ENCODE measurements at regions of chr4 and their contacts with region 1.

Region 1: DNA sequence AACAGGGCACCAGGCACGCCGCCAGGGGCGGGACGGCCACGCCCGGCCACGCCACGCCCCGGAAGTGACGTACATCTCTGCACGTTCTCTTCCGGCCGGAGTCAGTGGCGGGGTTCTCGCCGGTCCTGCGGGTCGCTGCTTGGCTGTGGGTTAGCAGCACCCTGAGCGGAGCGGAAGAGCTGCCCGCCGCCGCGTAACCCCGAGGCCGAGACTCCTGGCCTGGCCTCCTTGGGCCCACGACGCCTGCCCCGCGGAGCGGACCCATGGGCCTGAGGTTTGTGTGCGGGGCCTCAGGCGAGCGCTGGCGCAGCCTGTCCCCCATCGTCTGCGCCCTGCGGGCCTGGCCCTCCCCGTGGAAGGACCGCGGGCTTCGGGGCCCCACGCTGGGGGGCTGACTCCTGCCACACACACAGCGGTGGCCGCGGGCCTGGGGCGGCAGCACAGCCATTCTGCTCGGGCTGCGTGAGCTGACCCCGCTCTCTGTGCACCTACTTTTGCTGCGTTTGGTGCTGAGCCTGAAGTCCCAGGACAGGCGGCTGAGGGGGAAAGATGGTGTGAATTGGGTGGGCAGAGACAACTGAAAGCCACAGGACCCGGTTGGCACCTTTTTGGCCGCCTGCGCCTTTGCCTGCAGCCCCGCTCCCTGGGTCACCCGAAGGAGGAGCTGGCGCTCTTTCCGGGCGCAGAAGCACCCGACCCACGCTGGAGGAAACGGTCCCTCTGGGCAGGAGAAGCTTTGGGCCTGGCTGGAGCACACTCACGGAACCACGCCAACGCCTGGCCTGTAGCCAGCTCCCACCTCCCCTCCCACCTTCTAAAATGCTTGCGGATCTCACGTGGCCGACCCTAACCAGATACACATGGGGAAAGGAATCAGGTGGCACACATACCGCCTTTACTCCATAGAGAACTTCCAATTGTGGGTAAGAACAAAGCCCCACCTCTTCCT is 28.1 kb downstream of the NOP14 start:
- DNase-seq: peak; percentile 93 to 99 (median 96)
- ATAC-seq: peak; percentile 58
- H3K4me3 ChIP-seq: peak overlapping the region; percentile 92
- H3K4me3 Mint-ChIP-seq: peak overlapping the region; percentile 93
- H3K27ac ChIP-seq: peak overlapping the region; percentile 82 to 87
- H3K27ac Mint-ChIP-seq: peak overlapping the region; percentile 94
- H3K4me1 ChIP-seq: peaks cover 71% of the 10 kb centered on the region
- H3K4me1 Mint-ChIP-seq: peaks cover 45% of the 10 kb centered on the region
- H3K27me3 ChIP-seq: no peaks in the 10 kb centered on the region
- H3K27me3 Mint-ChIP-seq: no peaks in the 10 kb centered on the region
- CTCF ChIP-seq: no peak

Region 2: DNA sequence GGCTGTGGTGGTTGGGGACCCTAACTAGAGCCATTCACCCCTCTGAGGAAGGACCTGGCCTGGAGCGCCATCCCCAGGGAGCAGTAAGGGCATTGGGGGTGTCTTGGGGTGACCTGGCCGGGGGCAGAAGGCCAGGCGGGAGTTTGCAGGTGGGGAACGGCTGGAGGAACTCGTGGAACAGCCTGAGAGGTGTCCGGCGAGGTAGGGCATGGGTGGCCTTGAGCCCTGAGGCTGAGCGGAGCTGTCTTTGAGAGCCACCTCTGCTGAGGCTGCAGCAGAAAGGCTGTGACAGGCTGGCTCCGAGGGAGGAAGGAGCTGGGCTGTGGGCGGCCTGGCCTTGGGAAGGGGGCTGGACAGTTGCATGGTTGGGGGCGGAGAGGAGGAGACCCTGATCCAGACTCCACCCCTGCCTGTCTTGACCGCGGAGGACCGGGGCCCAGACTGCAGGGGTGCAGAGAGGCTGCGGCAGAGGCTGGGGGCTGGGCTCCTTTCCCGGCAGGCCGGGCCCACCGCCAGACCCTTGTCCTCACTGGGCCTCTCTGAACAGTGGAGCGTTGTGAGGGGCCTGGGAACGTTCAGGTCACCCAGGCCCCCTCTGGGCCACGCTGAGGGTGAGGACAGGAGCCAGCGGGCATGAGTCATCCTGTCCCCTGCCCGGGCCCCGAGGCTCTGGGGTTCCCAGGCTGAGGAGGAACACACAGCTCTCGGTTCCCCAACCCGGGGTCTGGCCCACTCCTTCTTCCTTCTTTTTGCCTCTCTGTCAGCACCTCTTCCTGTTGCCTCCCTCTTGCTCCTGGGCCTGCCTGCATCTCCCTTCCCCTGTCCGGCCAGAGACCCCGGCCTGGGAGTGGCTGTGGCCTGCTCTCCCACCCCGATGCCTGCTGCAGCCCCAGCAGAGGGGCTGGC is 134.1 kb before region 1 on chr4:
- CTCF ChIA-PET with region 1: no interaction called
- POLR2A ChIA-PET with region 1: interaction called, 13 read pairs
- intact Hi-C with region 1: no loop called
- DNase-seq: peak in 5 of 14 experiments; percentile 23 to 79 (median 41)
- ATAC-seq: no peak
- H3K4me3 ChIP-seq: peak overlapping the region; percentile 52
- H3K4me3 Mint-ChIP-seq: peak overlapping the region; percentile 51
- H3K27ac ChIP-seq: peak overlapping the region in 1 of 2 donors; percentile 37
- H3K27ac Mint-ChIP-seq: peak overlapping the region; percentile 70
- H3K4me1 ChIP-seq: peaks cover 86% of the 10 kb centered on the region
- H3K4me1 Mint-ChIP-seq: peaks cover 31% of the 10 kb centered on the region
- H3K27me3 ChIP-seq: no peaks in the 10 kb centered on the region
- H3K27me3 Mint-ChIP-seq: no peaks in the 10 kb centered on the region
- CTCF ChIP-seq: no peak

Region 3: DNA sequence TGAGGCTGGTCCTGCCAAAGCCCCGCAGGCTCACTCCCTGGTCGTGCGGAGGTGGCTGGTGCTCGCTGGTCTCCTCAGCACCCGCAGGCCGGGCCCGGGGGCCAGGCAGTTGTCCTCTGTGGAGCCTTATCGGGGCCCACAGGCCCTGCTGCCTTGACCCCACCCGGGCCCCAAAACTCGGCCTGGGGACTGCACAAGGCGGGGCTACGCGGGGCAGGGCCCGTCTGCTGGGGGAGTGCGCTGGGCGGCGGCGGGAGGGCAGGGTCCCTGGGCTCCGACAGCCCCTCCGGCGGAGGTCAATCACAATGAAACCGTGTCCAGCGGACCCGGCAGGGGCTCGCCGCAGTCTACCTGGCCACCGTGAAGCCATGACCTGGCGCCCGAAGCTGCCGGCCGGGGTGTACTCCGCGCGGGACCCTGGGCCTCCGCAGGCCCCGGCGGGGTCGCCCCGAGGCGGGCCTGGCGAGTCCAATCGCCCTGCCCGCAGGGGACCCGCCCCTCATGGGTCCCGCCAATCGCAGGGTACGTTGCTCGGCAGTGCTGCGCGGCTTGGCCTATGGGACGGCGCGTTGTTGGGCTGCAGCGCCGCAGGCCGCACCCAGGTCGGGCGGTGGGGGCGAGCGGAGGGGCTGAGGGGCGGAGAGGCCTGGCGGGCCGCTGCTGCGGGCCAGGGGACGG is 91.7 kb before region 1 on chr4 and contains the start of gene ADD1:
- CTCF ChIA-PET with region 1: no interaction called
- POLR2A ChIA-PET with region 1: interaction called, 5 read pairs
- intact Hi-C with region 1: loop called in 1 of 2 experiments (anchors 1 kb)
- DNase-seq: peak; percentile 82 to 100 (median 92)
- ATAC-seq: peak; percentile 93
- H3K4me3 ChIP-seq: peak within 1 kb of the TSS; percentile 97
- H3K4me3 Mint-ChIP-seq: peak within 1 kb of the TSS; percentile 98
- H3K27ac ChIP-seq: peak within 1 kb of the TSS; percentile 66 to 85
- H3K27ac Mint-ChIP-seq: peak within 1 kb of the TSS; percentile 92
- H3K4me1 ChIP-seq: peaks cover 49% of the 10 kb centered on the region
- H3K4me1 Mint-ChIP-seq: peaks cover 63% of the 10 kb centered on the region
- H3K27me3 ChIP-seq: no peaks in the 10 kb centered on the region
- H3K27me3 Mint-ChIP-seq: no peaks in the 10 kb centered on the region
- CTCF ChIP-seq: no peak
- total RNA-seq, gene ADD1: 153 TPM

Region 4: GRCh38 chr4:2954358-2955185 is 19.5 kb after region 1 on chr4:
- CTCF ChIA-PET with region 1: interaction called, 7 read pairs
- POLR2A ChIA-PET with region 1: interaction called, 18 read pairs
- intact Hi-C with region 1: no loop called
- DNase-seq: peak in 8 of 14 experiments; percentile 29 to 83 (median 55)
- ATAC-seq: peak; percentile 77
- H3K4me3 ChIP-seq: no peak overlapping the region
- H3K4me3 Mint-ChIP-seq: no peak overlapping the region
- H3K27ac ChIP-seq: peak overlapping the region; percentile 14 to 75
- H3K27ac Mint-ChIP-seq: peak overlapping the region; percentile 54
- H3K4me1 ChIP-seq: peaks cover 14% of the 10 kb centered on the region
- H3K4me1 Mint-ChIP-seq: peaks cover 46% of the 10 kb centered on the region
- H3K27me3 ChIP-seq: no peaks in the 10 kb centered on the region
- H3K27me3 Mint-ChIP-seq: no peaks in the 10 kb centered on the region
- CTCF ChIP-seq: peak; percentile 28

Region 5: DNA sequence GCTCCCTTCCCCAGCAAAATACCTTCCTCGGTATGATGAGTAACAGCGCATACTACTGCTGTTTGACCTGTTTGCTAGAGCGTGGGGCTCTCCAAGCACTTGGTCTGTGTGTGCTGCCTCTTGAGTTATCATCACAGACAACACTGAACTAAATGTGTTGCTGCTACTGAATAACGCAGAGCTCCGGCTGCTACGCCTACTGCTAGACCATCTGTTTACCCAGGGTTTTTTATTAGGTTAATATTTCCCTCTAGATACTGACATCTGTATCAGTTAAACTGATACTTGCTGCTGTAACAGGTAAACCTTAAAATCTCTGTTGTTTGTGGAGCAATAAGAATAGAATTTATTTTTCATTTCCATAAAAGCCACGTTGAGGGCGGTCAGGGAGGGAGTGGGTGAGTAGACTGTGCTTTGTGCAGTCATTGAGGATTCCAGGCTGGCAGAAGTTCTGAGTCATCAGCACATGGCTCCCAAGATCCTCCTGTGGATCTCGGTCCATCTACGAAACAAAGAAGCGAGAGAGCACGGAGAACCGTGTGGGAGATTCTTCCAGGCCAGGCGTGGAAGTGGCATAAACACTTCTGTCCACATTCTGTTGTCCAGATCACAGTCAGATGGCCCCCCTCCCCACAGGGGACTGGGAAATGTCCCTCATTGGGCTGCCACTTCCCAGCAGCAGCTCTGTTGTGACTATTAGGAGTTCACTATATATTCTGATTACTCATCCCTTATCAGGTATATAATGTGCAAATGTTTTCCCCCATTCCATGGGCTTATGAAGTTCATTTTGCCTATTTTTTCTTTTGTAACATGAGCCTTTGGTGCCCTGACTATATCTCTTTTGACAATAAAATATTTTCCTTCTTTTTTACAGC is 42.4 kb after region 1 on chr4:
- CTCF ChIA-PET with region 1: no interaction called
- POLR2A ChIA-PET with region 1: no interaction called
- intact Hi-C with region 1: no loop called
- DNase-seq: no peak
- ATAC-seq: no peak
- H3K4me3 ChIP-seq: no peak overlapping the region
- H3K4me3 Mint-ChIP-seq: no peak overlapping the region
- H3K27ac ChIP-seq: no peak overlapping the region
- H3K27ac Mint-ChIP-seq: no peak overlapping the region
- H3K4me1 ChIP-seq: peaks cover 2% of the 10 kb centered on the region
- H3K4me1 Mint-ChIP-seq: no peaks in the 10 kb centered on the region
- H3K27me3 ChIP-seq: peaks cover 0 to 8% of the 10 kb centered on the region in 2 experiments
- H3K27me3 Mint-ChIP-seq: no peaks in the 10 kb centered on the region
- CTCF ChIP-seq: no peak